ENCODE measurements at regions of chr3 and their contacts with region 1.

Region 1: DNA sequence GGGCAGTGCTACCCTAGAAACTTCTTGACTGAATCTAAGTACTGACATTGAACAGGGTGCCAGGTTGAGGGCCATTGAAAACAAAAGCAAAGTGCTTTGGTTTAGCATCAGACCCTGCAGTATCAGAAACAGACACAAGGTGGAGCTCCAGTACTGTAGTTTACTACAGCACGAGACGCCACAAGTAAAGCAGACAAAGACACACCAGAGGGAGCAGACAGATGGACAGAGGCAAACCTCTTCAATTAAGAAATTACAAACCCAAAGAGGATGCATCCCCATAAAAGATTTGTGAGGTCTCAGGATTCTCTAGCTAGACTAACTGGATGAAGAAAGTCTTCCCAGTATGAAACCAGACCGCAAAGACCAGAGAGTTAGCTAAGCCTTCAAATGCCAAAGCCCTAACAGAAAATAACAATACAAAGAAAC is 16.6 kb downstream of the TOP2B start:
- DNase-seq: peak; percentile 80
- H3K4me3 Mint-ChIP-seq: no peak overlapping the region
- H3K27ac Mint-ChIP-seq: peak overlapping the region; percentile 2
- H3K4me1 Mint-ChIP-seq: peaks cover 43% of the 10 kb centered on the region
- H3K27me3 Mint-ChIP-seq: no peaks in the 10 kb centered on the region

Region 2: DNA sequence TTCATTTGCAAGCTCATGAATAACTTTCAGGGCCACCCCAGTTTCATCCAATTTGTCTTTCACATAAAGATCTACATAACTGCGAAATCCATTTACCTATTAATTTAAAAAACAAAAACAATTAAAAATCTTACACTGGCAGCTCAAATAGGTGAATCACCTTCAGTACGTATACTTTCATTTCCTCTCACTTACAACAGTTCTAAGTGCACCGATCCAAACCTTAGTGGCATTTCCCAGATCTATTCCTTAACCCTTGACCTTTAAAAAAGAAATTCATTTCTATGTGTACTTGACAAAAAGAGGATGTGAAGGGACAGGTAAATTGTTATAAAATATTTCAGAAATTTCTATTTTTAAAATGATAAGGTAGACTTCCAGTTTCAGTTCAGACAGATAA is 14.2 kb before region 1 on chr3:
- CTCF ChIA-PET with region 1: interaction called, 19 read pairs
- POLR2A ChIA-PET with region 1: no interaction called
- intact Hi-C with region 1: no loop called
- DNase-seq: no peak
- H3K4me3 Mint-ChIP-seq: no peak overlapping the region
- H3K27ac Mint-ChIP-seq: no peak overlapping the region
- H3K4me1 Mint-ChIP-seq: peaks cover 5% of the 10 kb centered on the region
- H3K27me3 Mint-ChIP-seq: no peaks in the 10 kb centered on the region

Region 3: DNA sequence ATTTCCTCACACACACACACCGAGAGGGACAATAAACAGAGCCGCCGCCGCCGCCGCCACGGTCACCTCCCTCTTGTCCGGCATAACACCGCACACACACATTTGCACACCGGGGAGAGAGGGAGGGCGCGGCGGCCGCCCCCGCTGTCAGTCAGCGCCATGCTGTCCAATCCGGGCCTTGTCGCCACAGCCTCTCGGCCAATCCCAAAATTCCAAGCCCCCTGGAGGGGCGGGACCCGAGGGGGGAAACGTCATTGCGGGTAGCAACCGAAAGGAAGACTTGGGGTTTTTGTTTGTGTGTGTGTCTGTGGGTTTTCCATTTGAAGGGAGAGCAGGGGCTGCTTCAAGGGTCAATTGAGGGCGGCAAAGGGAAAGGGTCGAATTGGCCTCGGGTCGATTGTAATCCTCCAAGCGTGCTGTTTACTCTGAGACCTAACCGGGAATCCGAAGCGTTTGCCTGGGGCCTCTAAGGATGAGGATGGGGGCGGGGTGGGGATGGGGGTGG is 16.7 kb after region 1 on chr3 and contains the start of gene TOP2B:
- CTCF ChIA-PET with region 1: interaction called, 16 read pairs
- POLR2A ChIA-PET with region 1: no interaction called
- intact Hi-C with region 1: loop called (anchors 1 kb)
- DNase-seq: peak; percentile 97
- H3K4me3 Mint-ChIP-seq: peak within 1 kb of the TSS; percentile 97
- H3K27ac Mint-ChIP-seq: peak within 1 kb of the TSS; percentile 99
- H3K4me1 Mint-ChIP-seq: peaks cover 40% of the 10 kb centered on the region
- H3K27me3 Mint-ChIP-seq: no peaks in the 10 kb centered on the region
- total RNA-seq, gene TOP2B: 133 to 134 TPM

Region 4: DNA sequence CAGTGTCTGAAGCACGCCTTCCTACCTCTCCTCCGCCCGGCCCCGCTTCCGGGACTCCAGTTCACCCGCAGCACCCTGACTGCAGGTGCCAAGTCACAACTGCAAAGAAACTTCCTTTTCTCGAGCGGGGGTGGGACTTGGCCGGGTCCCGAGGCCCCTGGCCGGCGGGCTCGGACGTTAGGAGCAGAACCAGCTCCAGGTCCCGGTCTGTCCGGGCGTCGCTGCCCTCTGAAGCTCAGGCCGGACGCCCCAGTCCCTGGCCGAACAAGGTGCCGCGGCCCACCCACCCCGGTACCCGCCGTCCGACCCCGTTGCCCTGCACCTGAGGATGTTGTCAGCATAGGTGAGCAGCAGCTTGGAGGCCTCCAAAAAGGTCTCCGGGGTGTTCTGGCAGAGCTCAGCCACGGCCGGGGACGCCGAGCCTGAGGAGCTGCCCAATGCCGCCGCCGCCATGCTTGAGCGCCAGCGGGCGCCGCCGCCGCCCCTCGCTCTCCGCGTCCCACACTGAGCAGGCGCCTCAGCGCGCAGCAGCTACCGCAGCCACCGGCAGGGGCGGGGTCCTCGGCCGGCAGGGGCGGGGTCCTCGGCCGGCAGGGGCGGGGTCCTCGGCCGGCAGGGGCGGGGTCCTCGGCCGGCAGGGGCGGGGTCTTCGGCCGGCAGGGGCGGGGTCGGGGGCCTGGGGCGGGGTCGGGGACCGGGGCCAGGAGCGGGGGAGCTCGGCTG is 135.0 kb after region 1 on chr3 and contains the start of gene NGLY1:
- CTCF ChIA-PET with region 1: interaction called, 4 read pairs
- POLR2A ChIA-PET with region 1: no interaction called
- intact Hi-C with region 1: loop called (anchors 1 kb)
- DNase-seq: peak; percentile 89
- H3K4me3 Mint-ChIP-seq: peak within 1 kb of the TSS; percentile 87
- H3K27ac Mint-ChIP-seq: peak within 1 kb of the TSS; percentile 83
- H3K4me1 Mint-ChIP-seq: peaks cover 46% of the 10 kb centered on the region
- H3K27me3 Mint-ChIP-seq: no peaks in the 10 kb centered on the region
- total RNA-seq, gene NGLY1: 51.5 to 56.7 TPM

Region 5: GRCh38 chr3:25856902-25857518 is 208.9 kb after region 1 on chr3:
- CTCF ChIA-PET with region 1: interaction called, 169 read pairs
- POLR2A ChIA-PET with region 1: interaction called, 3 read pairs
- intact Hi-C with region 1: loop called (anchors 1 kb)
- DNase-seq: no peak
- H3K4me3 Mint-ChIP-seq: no peak overlapping the region
- H3K27ac Mint-ChIP-seq: no peak overlapping the region
- H3K4me1 Mint-ChIP-seq: no peaks in the 10 kb centered on the region
- H3K27me3 Mint-ChIP-seq: no peaks in the 10 kb centered on the region

Region 6: DNA sequence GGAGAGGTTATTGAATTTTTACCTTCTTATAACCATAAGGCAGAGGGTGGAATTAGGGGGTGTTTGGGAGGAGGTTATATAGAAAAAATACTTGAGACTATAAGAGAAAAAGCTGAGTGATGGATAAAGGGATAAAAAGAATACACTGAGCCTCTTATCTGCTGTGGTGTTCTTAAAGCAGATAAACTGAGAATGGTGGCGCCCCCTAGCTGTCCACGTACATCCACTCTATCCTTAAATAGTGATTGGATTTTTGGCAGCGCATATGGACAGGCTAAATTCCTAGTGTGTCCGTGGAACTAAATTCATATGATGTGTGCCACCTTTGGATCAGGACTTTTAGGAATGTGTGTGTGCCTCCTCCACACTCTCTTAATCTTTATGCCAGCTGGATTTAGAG is 262.9 kb after region 1 on chr3:
- CTCF ChIA-PET with region 1: interaction called, 10 read pairs
- POLR2A ChIA-PET with region 1: no interaction called
- intact Hi-C with region 1: loop called (anchors 1 kb)
- DNase-seq: peak; percentile 61
- H3K4me3 Mint-ChIP-seq: no peak overlapping the region
- H3K27ac Mint-ChIP-seq: no peak overlapping the region
- H3K4me1 Mint-ChIP-seq: peaks cover 13% of the 10 kb centered on the region
- H3K27me3 Mint-ChIP-seq: no peaks in the 10 kb centered on the region

Measured in activated CD4-positive, alpha-beta memory T cell treated with anti-CD3 and anti-CD28 coated beads for 36 hours (primary cell).